WTC11 (cell line): ENCODE measurements at regions of chr9 and their contacts with region 1.

Region 1: GRCh38 chr9:121121582-121122087 is 46.9 kb downstream of the CNTRL start:
- DNase-seq: peak; percentile 96
- ATAC-seq: peak; percentile 100
- H3K4me3 Mint-ChIP-seq: peak overlapping the region; percentile 74
- H3K27ac Mint-ChIP-seq: peak overlapping the region; percentile 39; the same call in 1 of the 2 replicates
- H3K4me1 Mint-ChIP-seq: peaks cover 15% of the 10 kb centered on the region
- H3K27me3 Mint-ChIP-seq: no peaks in the 10 kb centered on the region
- CTCF ChIP-seq: no peak

Region 2: GRCh38 chr9:121074635-121075385 is 46.8 kb before region 1 on chr9 and contains the start of gene CNTRL:
- CTCF ChIA-PET with region 1: no interaction called
- POLR2A ChIA-PET with region 1: no interaction called
- DNase-seq: peak; percentile 88
- ATAC-seq: peak; percentile 81
- H3K4me3 Mint-ChIP-seq: peak within 1 kb of the TSS; percentile 90
- H3K27ac Mint-ChIP-seq: peak within 1 kb of the TSS; percentile 91
- H3K4me1 Mint-ChIP-seq: peaks cover 23% of the 10 kb centered on the region
- H3K27me3 Mint-ChIP-seq: peaks cover 72% of the 10 kb centered on the region
- CTCF ChIP-seq: no peak
- total RNA-seq, gene CNTRL: 13.2 to 14.2 TPM (median 13.3 TPM) in 3 replicates

Region 3: DNA sequence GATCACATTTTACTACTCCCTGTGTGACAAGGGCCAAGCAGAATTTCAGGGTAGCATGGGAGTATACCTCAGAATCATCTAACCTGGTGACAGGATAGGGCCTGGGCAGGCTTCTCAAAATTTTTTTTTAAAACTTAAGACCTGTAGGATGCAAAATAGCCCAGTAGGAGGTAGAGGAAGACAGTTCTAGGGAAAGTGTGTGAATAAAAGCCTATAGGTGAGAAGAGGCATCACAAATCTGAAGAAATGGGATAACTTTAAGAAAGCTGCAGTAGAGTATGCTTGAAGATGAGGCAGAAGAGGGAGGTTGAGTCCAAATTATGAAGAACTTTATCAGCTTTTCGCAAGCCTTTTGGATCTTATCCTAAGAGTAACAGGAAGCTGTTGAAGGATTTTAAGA is 14.6 kb before region 1 on chr9:
- CTCF ChIA-PET with region 1: interaction called, 11 read pairs
- POLR2A ChIA-PET with region 1: no interaction called
- DNase-seq: no peak
- ATAC-seq: peak; percentile 85
- H3K4me3 Mint-ChIP-seq: no peak overlapping the region
- H3K27ac Mint-ChIP-seq: no peak overlapping the region
- H3K4me1 Mint-ChIP-seq: peaks cover 9% of the 10 kb centered on the region
- H3K27me3 Mint-ChIP-seq: no peaks in the 10 kb centered on the region
- CTCF ChIP-seq: no peak